ENCODE measurements at regions of chr21 and their contacts with region 1.

Region 1: DNA sequence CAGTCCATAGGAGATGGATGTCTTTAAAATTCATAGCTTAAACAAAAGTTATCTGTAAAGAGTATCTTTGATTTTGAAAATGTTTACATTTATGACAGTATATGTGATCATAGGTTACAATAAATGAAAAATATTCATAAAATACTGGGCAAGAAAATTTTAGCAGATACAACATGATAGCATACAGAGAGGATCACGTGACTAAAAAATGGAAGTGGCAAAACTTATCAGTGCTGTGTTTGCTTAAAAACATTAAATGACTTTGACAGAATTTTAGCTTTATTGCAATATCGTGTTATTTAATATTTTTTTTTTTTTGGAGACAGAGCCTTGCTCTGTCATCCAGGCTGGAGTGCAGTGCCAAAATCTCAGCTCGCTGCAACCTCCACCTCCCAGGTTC is 2294.1 kb downstream of the NCAM2 start:
- DNase-seq: no peak
- ATAC-seq: no peak
- H3K4me3 Mint-ChIP-seq: no peak overlapping the region
- H3K27ac Mint-ChIP-seq: no peak overlapping the region
- H3K4me1 Mint-ChIP-seq: no peaks in the 10 kb centered on the region
- H3K27me3 Mint-ChIP-seq: no peaks in the 10 kb centered on the region
- CTCF ChIP-seq: no peak

Region 2: DNA sequence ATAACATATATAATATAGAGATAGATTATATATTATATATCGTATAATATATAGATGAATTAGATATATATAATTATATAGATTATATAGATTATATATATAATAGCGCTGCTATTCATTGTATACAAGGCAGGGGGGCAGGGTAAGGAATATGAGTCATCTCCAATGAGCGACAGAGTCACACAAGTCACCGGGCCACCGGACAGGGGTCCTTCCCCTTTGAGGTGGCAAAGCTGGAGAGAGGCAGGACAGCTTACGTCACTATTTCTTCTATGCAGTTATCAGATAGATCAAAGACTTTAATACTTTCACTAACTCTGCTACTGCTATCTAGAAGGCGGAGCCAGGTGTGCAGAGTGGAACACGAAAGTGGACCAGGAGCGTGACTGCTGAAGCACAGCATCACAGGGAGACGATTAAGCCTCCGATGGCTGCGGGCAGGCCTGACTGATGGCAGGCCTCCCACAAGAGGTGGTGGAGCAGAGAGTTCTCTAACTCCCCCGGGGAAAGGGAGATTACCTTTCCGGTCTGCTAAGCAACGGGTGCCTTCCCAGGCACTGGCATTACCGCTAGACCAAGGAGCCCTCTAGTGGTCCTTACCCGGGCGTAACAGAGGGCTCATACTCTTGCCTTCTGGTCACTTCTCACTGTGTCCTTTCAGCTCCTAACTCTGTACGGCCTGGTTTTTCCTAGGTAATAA is 160.3 kb after region 1 on chr21:
- CTCF ChIA-PET with region 1: no interaction called
- POLR2A ChIA-PET with region 1: no interaction called
- intact Hi-C with region 1: no loop called
- DNase-seq: peak; percentile 21
- ATAC-seq: peak; percentile 34
- H3K4me3 Mint-ChIP-seq: no peak overlapping the region
- H3K27ac Mint-ChIP-seq: no peak overlapping the region
- H3K4me1 Mint-ChIP-seq: no peaks in the 10 kb centered on the region
- H3K27me3 Mint-ChIP-seq: no peaks in the 10 kb centered on the region
- CTCF ChIP-seq: no peak

Region 3: DNA sequence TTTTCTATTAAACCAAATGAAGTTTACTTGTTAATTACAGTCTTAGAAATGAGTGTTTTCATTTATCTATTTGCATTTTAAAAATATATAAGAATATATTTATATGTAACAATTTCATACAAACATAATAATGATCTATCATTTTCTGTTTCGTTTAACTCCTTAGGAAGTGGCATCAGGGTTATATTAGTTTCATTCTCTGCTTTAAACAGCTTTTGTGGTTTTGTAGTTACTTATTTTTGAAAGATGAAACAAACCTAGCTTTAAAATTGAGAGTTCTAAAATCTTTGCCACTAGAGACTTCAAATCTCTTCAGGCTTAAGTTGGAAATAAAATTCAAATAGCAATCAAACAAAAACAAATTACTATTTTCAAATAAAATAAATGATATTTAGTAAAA is 204.4 kb after region 1 on chr21:
- CTCF ChIA-PET with region 1: no interaction called
- POLR2A ChIA-PET with region 1: no interaction called
- intact Hi-C with region 1: loop called (anchors 5 kb)
- DNase-seq: no peak
- ATAC-seq: no peak
- H3K4me3 Mint-ChIP-seq: no peak overlapping the region
- H3K27ac Mint-ChIP-seq: no peak overlapping the region
- H3K4me1 Mint-ChIP-seq: no peaks in the 10 kb centered on the region
- H3K27me3 Mint-ChIP-seq: no peaks in the 10 kb centered on the region
- CTCF ChIP-seq: no peak